GM12878 (cell line): ENCODE measurements at regions of chrX and their contacts with region 1.

Region 1: DNA sequence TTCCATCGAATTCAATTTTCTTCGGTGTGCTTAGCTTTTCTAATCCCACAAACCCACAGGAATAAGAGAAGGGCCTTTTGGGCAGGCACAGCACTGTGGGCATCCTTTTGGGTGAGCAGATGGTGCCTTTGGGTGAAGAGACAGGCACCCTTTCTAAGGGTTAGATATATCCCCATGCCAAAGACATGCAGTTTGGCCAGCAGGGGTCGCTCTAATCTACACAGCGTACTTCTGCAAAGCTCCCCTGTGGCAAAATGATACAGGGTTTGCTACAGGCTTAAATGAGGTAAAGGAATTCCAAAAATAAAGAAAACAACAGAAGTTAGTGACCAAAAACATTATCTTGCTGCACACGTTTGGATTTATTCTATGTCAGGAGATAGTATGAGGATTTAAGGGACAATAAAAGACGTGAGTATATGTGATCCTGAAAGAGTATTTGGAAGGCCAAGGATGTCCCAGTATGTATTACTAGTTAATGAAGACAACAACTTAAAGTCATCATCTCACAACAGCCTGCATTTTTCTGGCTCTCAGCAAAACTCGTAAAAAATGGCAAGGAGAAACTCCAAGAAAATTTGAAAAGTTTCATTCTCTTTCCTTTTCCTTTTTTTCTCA is 49.5 kb downstream of the PHEX start:
- DNase-seq: no peak
- ATAC-seq: peak; percentile 96
- H3K4me3 ChIP-seq: no peak overlapping the region
- H3K27ac ChIP-seq: no peak overlapping the region
- H3K4me1 ChIP-seq: no peaks in the 10 kb centered on the region
- H3K27me3 ChIP-seq: no peaks in the 10 kb centered on the region
- CTCF ChIP-seq: peak; percentile 56 to 79 (median 77)
- EP300 ChIP-seq: no peak
- POLR2A ChIP-seq: no peak
- RAD21 ChIP-seq: peak; percentile 53

Region 2: GRCh38 chrX:21993265-21993664 is 88.3 kb before region 1 on chrX:
- CTCF ChIA-PET with region 1: interaction called, 90 read pairs
- POLR2A ChIA-PET with region 1: no interaction called
- RAD21 ChIA-PET with region 1: interaction called, 8 read pairs
- SMC1A ChIA-PET with region 1: interaction called, 11 read pairs
- in situ Hi-C with region 1: no loop called
- intact Hi-C with region 1: loop called (anchors 5 kb)
- DNase-seq: peak; percentile 30
- ATAC-seq: peak; percentile 36
- H3K4me3 ChIP-seq: no peak overlapping the region
- H3K27ac ChIP-seq: peak overlapping the region; percentile 62
- H3K4me1 ChIP-seq: peaks cover 16% of the 10 kb centered on the region
- H3K27me3 ChIP-seq: no peaks in the 10 kb centered on the region
- CTCF ChIP-seq: no peak
- EP300 ChIP-seq: no peak; a peak in 1 of 4 replicates
- POLR2A ChIP-seq: no peak
- RAD21 ChIP-seq: no peak

Region 3: DNA sequence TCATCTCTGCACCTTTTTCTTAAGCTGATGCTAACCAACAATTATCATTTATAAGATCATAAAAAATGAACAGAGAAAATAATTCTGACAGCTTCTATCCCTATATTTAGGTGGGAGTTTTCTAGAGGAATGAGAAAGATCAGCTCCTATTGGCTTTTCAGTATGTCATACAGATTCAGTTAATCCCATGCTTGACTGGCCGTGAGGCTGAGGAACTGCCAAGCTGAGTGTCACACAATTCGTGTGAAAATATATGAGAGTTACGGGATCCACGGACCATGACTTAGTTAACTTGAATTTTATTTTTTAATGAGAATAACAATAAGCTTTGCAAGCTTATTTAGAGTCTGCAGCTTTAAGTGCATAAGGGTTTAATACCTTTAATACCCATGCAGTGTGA is 12.0 kb before region 1 on chrX:
- CTCF ChIA-PET with region 1: interaction called, 80 read pairs
- POLR2A ChIA-PET with region 1: interaction called, 5 read pairs
- RAD21 ChIA-PET with region 1: interaction called, 23 read pairs
- SMC1A ChIA-PET with region 1: interaction called, 25 read pairs
- in situ Hi-C with region 1: no loop called
- intact Hi-C with region 1: no loop called
- DNase-seq: no peak
- ATAC-seq: peak; percentile 21; the same call in 1 of the 3 replicates
- H3K4me3 ChIP-seq: no peak overlapping the region
- H3K27ac ChIP-seq: no peak overlapping the region
- H3K4me1 ChIP-seq: no peaks in the 10 kb centered on the region
- H3K27me3 ChIP-seq: no peaks in the 10 kb centered on the region
- CTCF ChIP-seq: no peak
- EP300 ChIP-seq: no peak
- POLR2A ChIP-seq: no peak
- RAD21 ChIP-seq: no peak

Region 4: DNA sequence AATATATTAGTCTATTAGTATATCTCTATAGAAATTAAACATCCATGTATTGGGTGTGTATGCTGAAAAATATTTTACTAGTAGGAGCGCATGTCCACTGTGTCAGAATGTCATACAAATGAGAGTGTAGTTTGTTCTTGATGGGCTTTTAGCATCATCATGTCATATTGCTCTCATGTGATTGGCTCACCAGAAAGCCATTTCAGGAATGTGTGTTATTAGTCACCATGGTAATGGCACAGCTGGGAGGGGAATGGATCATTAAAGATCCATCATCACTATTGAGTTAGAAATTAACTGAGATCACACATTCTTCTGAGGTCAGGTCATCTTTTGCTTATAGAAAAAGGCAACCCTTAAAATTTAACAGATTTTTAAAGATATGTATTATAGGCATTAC is 27.9 kb after region 1 on chrX:
- CTCF ChIA-PET with region 1: interaction called, 15 read pairs
- POLR2A ChIA-PET with region 1: no interaction called
- RAD21 ChIA-PET with region 1: interaction called, 3 read pairs
- SMC1A ChIA-PET with region 1: interaction called, 4 read pairs
- in situ Hi-C with region 1: no loop called
- intact Hi-C with region 1: no loop called
- DNase-seq: no peak
- ATAC-seq: peak; percentile 50
- H3K4me3 ChIP-seq: no peak overlapping the region
- H3K27ac ChIP-seq: no peak overlapping the region
- H3K4me1 ChIP-seq: no peaks in the 10 kb centered on the region
- H3K27me3 ChIP-seq: no peaks in the 10 kb centered on the region
- CTCF ChIP-seq: no peak
- EP300 ChIP-seq: no peak
- POLR2A ChIP-seq: no peak
- RAD21 ChIP-seq: no peak

Region 5: DNA sequence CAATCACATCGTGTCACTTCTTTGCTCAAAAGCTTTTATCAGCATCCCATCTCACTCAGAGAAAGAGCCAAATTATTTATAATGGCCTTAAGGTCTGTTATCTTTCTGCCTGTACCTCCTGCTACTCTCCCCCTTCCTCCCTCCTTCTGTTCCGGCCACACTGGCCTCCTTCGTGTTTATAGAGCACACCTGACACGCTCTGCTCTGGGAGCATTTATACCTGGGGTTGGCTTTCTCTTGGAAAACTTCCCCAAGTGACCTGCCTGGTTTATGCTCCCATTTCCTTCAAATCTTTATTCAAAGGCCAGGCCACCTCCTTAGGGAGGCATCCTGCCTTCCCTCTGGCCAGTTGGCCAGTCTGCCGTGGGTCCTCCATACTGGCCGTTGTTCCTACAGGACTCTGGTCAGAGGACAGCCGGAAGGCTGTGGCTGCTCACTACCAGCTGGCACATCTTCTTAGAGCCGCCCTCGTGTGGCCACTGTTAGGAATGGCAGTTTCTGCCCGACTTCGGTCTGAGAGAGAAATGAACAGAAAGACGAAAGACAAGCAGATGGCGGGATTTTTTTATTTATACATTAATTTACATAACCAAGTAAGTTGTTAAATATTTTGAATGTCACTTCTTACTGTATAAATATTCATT is 111.0 kb after region 1 on chrX:
- CTCF ChIA-PET with region 1: interaction called, 28 read pairs
- POLR2A ChIA-PET with region 1: no interaction called
- RAD21 ChIA-PET with region 1: no interaction called
- SMC1A ChIA-PET with region 1: interaction called, 4 read pairs
- in situ Hi-C with region 1: no loop called
- intact Hi-C with region 1: loop called (anchors 2 kb)
- DNase-seq: peak; percentile 3
- ATAC-seq: peak; percentile 96
- H3K4me3 ChIP-seq: no peak overlapping the region
- H3K27ac ChIP-seq: no peak overlapping the region
- H3K4me1 ChIP-seq: no peaks in the 10 kb centered on the region
- H3K27me3 ChIP-seq: no peaks in the 10 kb centered on the region
- CTCF ChIP-seq: peak; percentile 73 to 82 (median 76)
- EP300 ChIP-seq: no peak
- POLR2A ChIP-seq: no peak
- RAD21 ChIP-seq: peak; percentile 58

Region 6: GRCh38 chrX:23854945-23855344 is 1773.4 kb after region 1 on chrX:
- CTCF ChIA-PET with region 1: no interaction called
- POLR2A ChIA-PET with region 1: no interaction called
- RAD21 ChIA-PET with region 1: no interaction called
- SMC1A ChIA-PET with region 1: no interaction called
- in situ Hi-C with region 1: no loop called
- intact Hi-C with region 1: no loop called
- DNase-seq: no peak
- ATAC-seq: no peak
- H3K4me3 ChIP-seq: no peak overlapping the region
- H3K27ac ChIP-seq: no peak overlapping the region
- H3K4me1 ChIP-seq: no peaks in the 10 kb centered on the region
- H3K27me3 ChIP-seq: no peaks in the 10 kb centered on the region
- CTCF ChIP-seq: no peak
- EP300 ChIP-seq: no peak
- POLR2A ChIP-seq: no peak
- RAD21 ChIP-seq: no peak